ENCODE measurements at regions of chr6 and their contacts with region 1.

Region 1: GRCh38 chr6:18693881-18694280 is 306.7 kb downstream of the RNF144B start:
- DNase-seq: no peak
- H3K4me3 Mint-ChIP-seq: no peak overlapping the region
- H3K27ac Mint-ChIP-seq: no peak overlapping the region
- H3K4me1 Mint-ChIP-seq: no peaks in the 10 kb centered on the region
- H3K27me3 Mint-ChIP-seq: peaks cover 12% of the 10 kb centered on the region
- CTCF ChIP-seq: no peak

Region 2: DNA sequence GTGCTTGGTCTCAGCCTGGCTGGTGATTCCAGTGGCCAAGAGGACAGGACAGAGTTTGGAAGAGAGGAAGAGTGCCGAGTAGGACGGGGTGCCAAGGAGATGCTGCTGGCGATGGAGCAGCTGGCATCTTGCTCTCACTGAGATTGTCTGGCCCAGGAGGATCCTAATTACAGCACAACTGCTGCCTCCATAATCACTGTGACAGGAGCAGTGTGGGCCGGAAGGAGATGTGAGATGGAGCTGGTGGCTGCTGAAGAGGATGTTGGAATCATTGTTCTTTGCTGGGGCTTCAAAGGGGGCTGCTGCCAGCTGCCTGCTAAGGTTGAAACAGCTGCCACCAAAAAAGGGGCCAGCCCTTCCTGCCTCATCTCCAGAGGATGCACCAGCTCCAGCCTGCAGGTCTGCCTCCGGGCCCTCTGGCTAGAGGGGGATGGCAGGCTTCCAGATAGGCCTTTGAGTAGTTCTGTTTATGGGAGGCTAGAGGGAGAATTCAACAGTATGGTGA is 92.3 kb before region 1 on chr6:
- CTCF ChIA-PET with region 1: no interaction called
- intact Hi-C with region 1: loop called (anchors 5 kb)
- DNase-seq: no peak
- H3K4me3 Mint-ChIP-seq: no peak overlapping the region
- H3K27ac Mint-ChIP-seq: no peak overlapping the region
- H3K4me1 Mint-ChIP-seq: no peaks in the 10 kb centered on the region
- H3K27me3 Mint-ChIP-seq: peaks cover 56% of the 10 kb centered on the region
- CTCF ChIP-seq: no peak

Region 3: DNA sequence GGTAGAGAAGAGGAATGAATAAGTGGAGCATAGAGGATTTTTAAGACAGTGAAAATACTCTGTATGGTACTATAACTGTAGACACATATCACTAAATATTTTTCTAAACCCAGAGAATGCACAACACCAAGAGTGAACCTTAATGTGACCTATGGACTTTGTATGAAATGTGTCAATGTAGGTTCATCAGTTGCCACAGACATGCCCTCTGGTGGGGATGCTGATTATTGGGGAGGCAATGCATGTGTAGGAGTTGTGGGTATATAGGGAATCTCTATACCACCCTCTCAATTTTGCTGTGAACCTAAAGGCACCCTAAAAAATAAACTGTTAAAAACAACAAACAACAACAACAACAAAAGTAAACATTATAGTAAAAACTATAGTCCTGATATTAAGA is 13.0 kb before region 1 on chr6:
- CTCF ChIA-PET with region 1: no interaction called
- intact Hi-C with region 1: no loop called
- DNase-seq: no peak
- H3K4me3 Mint-ChIP-seq: no peak overlapping the region
- H3K27ac Mint-ChIP-seq: no peak overlapping the region
- H3K4me1 Mint-ChIP-seq: no peaks in the 10 kb centered on the region
- H3K27me3 Mint-ChIP-seq: no peaks in the 10 kb centered on the region
- CTCF ChIP-seq: no peak

Measured in Calu3 (cell line).